ENCODE measurements at regions of chr20 and their contacts with region 1.

Region 1: GRCh38 chr20:10558635-10559187 is 115.1 kb downstream of the JAG1 start:
- DNase-seq: peak; percentile 77
- H3K4me3 Mint-ChIP-seq: no peak overlapping the region
- H3K27ac Mint-ChIP-seq: peak overlapping the region; percentile 42
- H3K4me1 Mint-ChIP-seq: peaks cover 15% of the 10 kb centered on the region
- H3K27me3 Mint-ChIP-seq: no peaks in the 10 kb centered on the region

Region 2: DNA sequence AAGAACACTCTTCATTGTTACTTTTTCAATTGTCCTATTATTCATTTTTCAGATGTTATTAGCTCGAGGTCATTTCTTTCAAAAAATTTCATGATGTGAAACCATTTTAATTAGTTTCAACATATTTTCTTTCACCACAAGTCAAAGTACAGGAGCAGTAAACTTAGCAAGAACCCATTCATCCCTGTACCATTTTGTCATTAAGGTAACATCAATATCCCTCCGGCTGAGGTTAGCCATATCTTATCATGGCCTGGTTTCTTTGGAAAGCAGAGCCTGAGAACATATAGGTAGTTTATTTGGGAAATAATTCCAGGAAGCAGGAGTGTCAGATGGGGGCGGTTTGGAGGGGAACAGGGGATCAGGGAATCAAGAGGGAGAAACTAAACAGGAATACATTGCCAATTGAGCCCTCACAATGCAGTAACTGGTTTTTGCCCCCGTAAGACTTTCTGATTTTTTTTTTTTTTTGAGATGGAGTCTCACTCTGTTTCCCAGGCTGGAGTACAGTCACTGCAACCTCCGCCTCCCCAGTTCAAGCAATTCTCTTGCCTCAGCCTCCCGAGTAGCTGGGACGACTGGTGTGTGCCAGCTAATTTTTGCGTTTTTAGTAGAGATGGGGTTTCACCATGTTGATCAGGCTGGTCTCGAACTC is 208.4 kb before region 1 on chr20:
- CTCF ChIA-PET with region 1: no interaction called
- intact Hi-C with region 1: loop called (anchors 2 kb)
- DNase-seq: no peak
- H3K4me3 Mint-ChIP-seq: no peak overlapping the region
- H3K27ac Mint-ChIP-seq: peak overlapping the region; percentile 86
- H3K4me1 Mint-ChIP-seq: peaks cover 19% of the 10 kb centered on the region
- H3K27me3 Mint-ChIP-seq: no peaks in the 10 kb centered on the region

Region 3: GRCh38 chr20:10427060-10427692 is 131.5 kb before region 1 on chr20:
- CTCF ChIA-PET with region 1: no interaction called
- intact Hi-C with region 1: no loop called
- DNase-seq: peak; percentile 63
- H3K4me3 Mint-ChIP-seq: no peak overlapping the region
- H3K27ac Mint-ChIP-seq: no peak overlapping the region
- H3K4me1 Mint-ChIP-seq: peaks cover 44% of the 10 kb centered on the region
- H3K27me3 Mint-ChIP-seq: no peaks in the 10 kb centered on the region

Region 4: GRCh38 chr20:10511509-10512251 is 47.0 kb before region 1 on chr20:
- CTCF ChIA-PET with region 1: no interaction called
- intact Hi-C with region 1: loop called (anchors 2 kb)
- DNase-seq: peak; percentile 77
- H3K4me3 Mint-ChIP-seq: no peak overlapping the region
- H3K27ac Mint-ChIP-seq: peak overlapping the region; percentile 56
- H3K4me1 Mint-ChIP-seq: peaks cover 25% of the 10 kb centered on the region
- H3K27me3 Mint-ChIP-seq: no peaks in the 10 kb centered on the region

Region 5: GRCh38 chr20:10521068-10521831 is 37.5 kb before region 1 on chr20:
- CTCF ChIA-PET with region 1: no interaction called
- intact Hi-C with region 1: loop called (anchors 2 kb)
- DNase-seq: no peak
- H3K4me3 Mint-ChIP-seq: no peak overlapping the region
- H3K27ac Mint-ChIP-seq: no peak overlapping the region
- H3K4me1 Mint-ChIP-seq: peaks cover 27% of the 10 kb centered on the region
- H3K27me3 Mint-ChIP-seq: no peaks in the 10 kb centered on the region

Region 6: GRCh38 chr20:10603971-10604864 is 45.5 kb after region 1 on chr20:
- CTCF ChIA-PET with region 1: interaction called, 4 read pairs
- intact Hi-C with region 1: loop called (anchors 1 kb)
- DNase-seq: no peak
- H3K4me3 Mint-ChIP-seq: no peak overlapping the region
- H3K27ac Mint-ChIP-seq: no peak overlapping the region
- H3K4me1 Mint-ChIP-seq: peaks cover 4% of the 10 kb centered on the region
- H3K27me3 Mint-ChIP-seq: no peaks in the 10 kb centered on the region

Region 7: DNA sequence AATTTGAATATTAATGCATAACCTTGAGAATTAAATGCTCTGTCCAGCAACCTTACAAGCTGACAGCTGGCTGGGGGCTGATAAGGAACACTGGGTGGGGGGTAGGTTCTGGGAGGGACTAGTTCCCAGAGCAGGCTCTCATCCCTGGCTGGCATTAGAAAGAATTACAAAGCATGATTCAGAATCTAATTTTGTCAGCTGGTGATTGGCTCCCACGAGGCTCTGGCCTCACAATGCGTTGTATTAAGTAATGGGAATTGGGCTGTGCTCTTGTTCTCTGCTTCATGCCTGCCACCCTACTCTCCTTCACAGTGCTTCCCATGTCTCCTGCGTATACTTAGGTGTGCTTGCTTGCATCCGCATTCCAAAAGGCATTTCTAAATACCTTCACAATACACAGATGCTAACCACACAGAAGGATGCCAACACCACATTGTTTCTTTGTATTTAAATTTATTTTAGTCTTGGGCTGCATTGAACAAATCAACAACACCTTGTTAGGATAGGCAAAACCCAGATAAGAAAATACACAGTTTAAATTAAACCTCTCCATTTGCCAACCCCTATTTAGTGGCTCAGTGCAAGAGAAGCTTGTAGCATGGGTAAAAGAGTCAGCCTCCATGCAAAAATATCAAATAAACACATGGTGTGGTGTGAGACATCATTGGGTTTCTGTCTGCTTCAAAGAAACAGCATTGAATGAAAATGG is 549.5 kb after region 1 on chr20:
- CTCF ChIA-PET with region 1: no interaction called
- intact Hi-C with region 1: no loop called
- DNase-seq: no peak
- H3K4me3 Mint-ChIP-seq: no peak overlapping the region
- H3K27ac Mint-ChIP-seq: no peak overlapping the region
- H3K4me1 Mint-ChIP-seq: no peaks in the 10 kb centered on the region
- H3K27me3 Mint-ChIP-seq: no peaks in the 10 kb centered on the region

Measured in activated naive CD4-positive, alpha-beta T cell treated with anti-CD3 and anti-CD28 coated beads for 36 hours (primary cell).